Calu3 (cell line): ENCODE measurements at regions of chr2 and their contacts with region 1.

Region 1: GRCh38 chr2:38602732-38603401 is at the start of gene HNRNPLL:
- DNase-seq: peak; percentile 99
- H3K4me3 Mint-ChIP-seq: peak within 1 kb of the TSS; percentile 86
- H3K27ac Mint-ChIP-seq: peak within 1 kb of the TSS; percentile 75
- H3K4me1 Mint-ChIP-seq: peaks cover 29% of the 10 kb centered on the region
- H3K27me3 Mint-ChIP-seq: no peaks in the 10 kb centered on the region
- CTCF ChIP-seq: no peak
- total RNA-seq, gene HNRNPLL: 47.6 and 51.3 TPM in 2 replicates

Region 2: GRCh38 chr2:38665854-38666555 is 63.1 kb after region 1 on chr2 and contains the start of gene GALM:
- CTCF ChIA-PET with region 1: no interaction called
- intact Hi-C with region 1: loop called (anchors 1 kb)
- DNase-seq: peak; percentile 83
- H3K4me3 Mint-ChIP-seq: peak within 1 kb of the TSS; percentile 72
- H3K27ac Mint-ChIP-seq: peak within 1 kb of the TSS; percentile 55
- H3K4me1 Mint-ChIP-seq: peaks cover 11% of the 10 kb centered on the region
- H3K27me3 Mint-ChIP-seq: no peaks in the 10 kb centered on the region
- CTCF ChIP-seq: no peak
- total RNA-seq, gene GALM: 9.1 and 11.3 TPM in 2 replicates